ENCODE measurements at regions of chr1 and their contacts with region 1.

Region 1: GRCh38 chr1:200488375-200489165 is 78.7 kb upstream of the ZNF281 start:
- ATAC-seq: peak; percentile 70 to 94 (median 78)
- H3K4me3 ChIP-seq: no peak overlapping the region
- H3K27ac ChIP-seq: no peak overlapping the region
- H3K4me1 ChIP-seq: peaks cover under 1 to 4% of the 10 kb centered on the region in 2 donors

Region 2: DNA sequence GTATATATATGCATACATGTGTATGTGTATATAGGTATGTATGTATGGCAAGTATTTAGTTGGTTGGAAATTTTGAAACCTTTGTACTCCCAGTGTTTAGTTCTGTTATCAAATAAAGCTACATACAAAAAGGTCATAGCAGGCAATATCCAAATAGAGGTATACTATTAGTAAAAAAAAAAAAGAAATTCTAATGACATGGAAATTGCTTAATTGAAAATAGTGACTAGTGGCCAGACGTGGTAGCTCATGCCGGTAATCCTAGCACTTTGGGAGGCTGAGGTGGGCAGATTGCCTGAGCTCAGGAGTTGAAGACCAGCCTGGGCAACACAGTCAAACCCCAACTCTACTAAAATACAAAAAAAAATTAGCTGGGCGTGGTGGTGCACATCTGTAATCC is 812.6 kb before region 1 on chr1:
- in situ Hi-C with region 1: loop called in 7 of 9 experiments (anchors 10 to 25 kb)
- ATAC-seq: no peak
- H3K4me3 ChIP-seq: no peak overlapping the region
- H3K27ac ChIP-seq: no peak overlapping the region
- H3K4me1 ChIP-seq: no peaks in the 10 kb centered on the region

Region 3: GRCh38 chr1:199684686-199685273 is 803.8 kb before region 1 on chr1:
- in situ Hi-C with region 1: loop called in 7 of 9 experiments (anchors 10 to 25 kb)
- ATAC-seq: peak; percentile 73 to 91 (median 84)
- H3K4me3 ChIP-seq: no peak overlapping the region
- H3K27ac ChIP-seq: no peak overlapping the region
- H3K4me1 ChIP-seq: peaks cover 17 to 19% of the 10 kb centered on the region in 2 donors

Region 4: GRCh38 chr1:200139661-200140250 is 348.8 kb before region 1 on chr1:
- in situ Hi-C with region 1: loop called in 3 of 9 experiments (anchors 25 kb)
- ATAC-seq: peak in 4 of 8 experiments; percentile 61 to 89 (median 84)
- H3K4me3 ChIP-seq: no peak overlapping the region
- H3K27ac ChIP-seq: no peak overlapping the region
- H3K4me1 ChIP-seq: no peaks in the 10 kb centered on the region

Region 5: DNA sequence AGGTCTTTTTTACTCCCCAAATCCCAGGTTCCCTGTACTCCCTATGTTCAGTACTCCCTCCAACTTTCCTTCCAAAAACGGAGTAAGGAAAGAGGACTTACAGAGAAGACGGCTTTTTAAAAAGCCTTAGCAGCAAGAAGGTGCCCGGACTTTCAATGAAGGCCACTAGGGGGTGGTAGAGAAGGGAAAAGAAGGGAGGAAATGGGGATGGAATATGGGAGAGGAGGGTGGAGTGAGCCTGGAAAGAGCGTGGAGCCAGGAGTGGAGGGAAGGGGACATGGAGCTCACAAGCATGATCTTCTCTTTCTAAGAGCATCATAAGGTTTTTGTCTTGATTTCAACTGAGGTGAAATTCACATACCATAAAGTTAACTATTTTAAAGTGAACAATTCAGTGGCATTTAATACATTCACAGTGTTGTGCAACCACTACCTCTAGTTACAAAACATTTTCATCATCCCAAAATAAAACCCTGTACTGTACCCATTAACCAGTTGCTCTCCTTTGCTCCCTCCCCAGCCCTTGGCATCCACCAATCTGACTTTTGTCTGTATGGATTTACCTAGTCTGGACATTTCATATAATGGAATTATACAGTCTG is 208.7 kb before region 1 on chr1:
- in situ Hi-C with region 1: loop called in 3 of 9 experiments (anchors 25 kb)
- ATAC-seq: peak in 3 of 8 experiments; percentile 82 to 93 (median 88)
- H3K4me3 ChIP-seq: no peak overlapping the region
- H3K27ac ChIP-seq: no peak overlapping the region
- H3K4me1 ChIP-seq: no peaks in the 10 kb centered on the region

Region 6: DNA sequence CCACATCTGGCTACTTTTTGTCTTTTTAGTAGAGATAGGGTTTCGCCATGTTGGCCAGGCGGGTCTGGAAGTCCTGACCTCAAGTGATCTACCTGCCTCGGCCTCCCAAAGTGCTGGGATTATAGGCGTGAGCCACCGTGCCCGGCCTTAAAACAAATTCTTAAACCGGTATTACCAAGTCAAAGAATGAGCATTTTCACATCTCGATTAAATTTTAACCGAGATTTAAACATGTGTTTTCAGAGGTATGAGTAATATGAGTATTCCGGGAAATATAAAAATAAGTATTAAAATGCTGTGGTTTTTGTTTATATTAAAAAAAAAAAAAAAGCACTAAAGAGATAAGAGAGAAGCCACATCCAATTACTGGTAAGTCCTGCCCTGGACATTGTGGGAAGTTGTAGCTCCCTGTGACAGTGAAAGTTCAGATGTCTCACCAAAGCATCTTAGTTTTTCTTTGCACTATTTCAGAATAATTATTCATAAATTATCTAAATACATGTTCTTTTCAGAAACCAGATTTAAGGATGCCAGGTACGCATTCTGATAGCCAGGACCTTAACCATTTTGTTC is 103.7 kb before region 1 on chr1:
- in situ Hi-C with region 1: no loop called
- ATAC-seq: no peak
- H3K4me3 ChIP-seq: no peak overlapping the region
- H3K27ac ChIP-seq: no peak overlapping the region
- H3K4me1 ChIP-seq: peaks cover 0 to 6% of the 10 kb centered on the region in 2 donors